PC-3 (cell line): ENCODE measurements at regions of chr17 and their contacts with region 1.

Region 1: DNA sequence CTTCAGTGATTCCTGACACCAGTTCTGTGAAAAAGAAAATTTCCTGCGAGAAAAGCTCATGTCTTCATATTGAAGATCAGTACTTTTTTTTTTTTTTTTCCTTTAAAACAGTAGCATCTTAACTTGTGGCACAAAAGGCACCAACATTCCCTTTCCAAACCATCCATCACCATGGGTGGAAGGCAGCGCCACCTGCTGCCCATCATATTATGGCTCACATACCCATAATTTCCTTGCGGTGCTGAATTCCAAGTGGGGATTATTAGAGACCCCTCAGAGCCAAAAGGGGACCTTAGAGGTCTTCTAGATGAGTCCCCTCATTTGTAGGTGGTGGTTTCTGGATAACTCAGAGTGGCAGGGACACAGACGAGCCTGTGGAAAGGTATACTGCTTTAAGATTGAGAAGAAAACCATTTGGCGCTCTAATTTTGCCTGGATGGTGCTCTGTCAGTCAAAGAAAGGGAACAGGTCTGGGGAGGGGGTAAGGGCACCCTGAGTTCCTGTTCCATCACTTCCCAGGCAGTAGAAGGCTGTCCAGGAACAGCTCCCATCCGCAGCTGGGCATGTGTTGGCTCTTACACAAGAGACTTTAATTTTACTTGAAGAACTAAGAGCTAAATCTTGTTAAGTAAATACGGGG is 7.9 kb upstream of the SOST start:
- DNase-seq: peak; percentile 78
- ATAC-seq: peak; percentile 63
- H3K4me3 ChIP-seq: no peak overlapping the region
- H3K27ac ChIP-seq: no peak overlapping the region
- H3K4me1 ChIP-seq: no peaks in the 10 kb centered on the region
- H3K27me3 ChIP-seq: no peaks in the 10 kb centered on the region
- CTCF ChIP-seq: peak; percentile 98

Region 2: DNA sequence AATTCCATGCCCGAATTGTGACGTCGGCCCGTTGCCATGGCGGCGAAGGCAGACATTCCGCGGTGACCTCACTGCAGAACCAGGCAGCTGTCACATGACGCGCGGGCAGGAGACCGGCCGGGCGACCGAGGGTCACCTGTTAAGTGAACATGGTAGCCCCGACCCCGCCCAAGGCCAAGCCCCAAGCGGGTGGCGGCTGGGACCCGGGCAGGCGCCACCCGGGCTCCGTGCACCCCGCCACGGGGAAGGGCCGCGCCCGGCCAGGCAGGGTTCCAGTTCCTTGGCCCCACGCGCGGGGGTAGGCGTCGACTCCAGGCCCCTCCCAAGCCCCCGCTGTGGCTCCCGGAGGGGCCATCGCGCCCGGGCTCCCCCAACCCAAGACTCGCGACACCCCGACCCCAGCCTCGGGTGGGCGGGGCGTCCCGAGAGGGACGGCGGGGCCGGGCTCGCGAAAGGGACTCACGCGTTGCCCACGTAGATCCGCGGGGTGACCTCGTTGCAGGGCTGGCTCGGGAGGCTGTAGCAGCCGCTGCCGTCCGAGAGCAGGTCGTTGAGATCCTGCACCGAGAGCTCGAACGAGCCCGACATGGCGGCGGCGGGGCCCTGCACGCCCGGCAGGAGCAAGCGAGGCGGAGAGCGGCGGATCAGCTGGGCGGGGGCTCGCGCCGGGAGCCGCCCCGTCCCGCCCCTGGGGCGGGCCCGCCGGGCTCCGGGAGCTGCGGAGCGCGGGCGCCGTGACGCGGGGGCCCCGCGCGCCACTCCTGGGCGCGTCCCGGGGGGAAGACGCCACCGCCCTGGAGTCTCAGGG is 12.0 kb after region 1 on chr17 and contains the start of gene DUSP3:
- CTCF ChIA-PET with region 1: no interaction called
- POLR2A ChIA-PET with region 1: interaction called, 17 read pairs
- intact Hi-C with region 1: no loop called
- DNase-seq: peak; percentile 89
- ATAC-seq: peak; percentile 95
- H3K4me3 ChIP-seq: peak within 1 kb of the TSS; percentile 94
- H3K27ac ChIP-seq: peak within 1 kb of the TSS; percentile 74
- H3K4me1 ChIP-seq: peaks cover 19% of the 10 kb centered on the region
- H3K27me3 ChIP-seq: no peaks in the 10 kb centered on the region
- CTCF ChIP-seq: no peak
- total RNA-seq, gene DUSP3: 48.6 and 50.7 TPM in 2 replicates

Region 3: DNA sequence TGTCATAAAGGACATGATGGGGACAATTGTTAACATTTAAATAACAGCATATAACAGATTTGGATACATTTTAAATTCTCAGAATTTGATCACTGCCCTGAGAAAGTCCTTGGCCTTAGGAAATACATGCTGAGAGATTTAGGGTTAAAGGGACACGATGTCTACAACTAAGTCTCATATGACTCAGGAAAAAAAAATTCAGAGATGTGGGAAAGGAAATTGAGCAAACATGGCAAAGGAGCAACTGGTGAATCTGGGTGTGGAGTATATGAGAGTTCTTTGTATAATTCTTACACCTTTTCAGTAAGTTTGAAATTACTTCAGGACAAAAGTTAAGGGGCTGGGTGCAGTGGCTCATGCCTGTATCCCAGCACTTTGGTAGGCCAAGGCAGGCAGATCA is 48.2 kb after region 1 on chr17:
- CTCF ChIA-PET with region 1: no interaction called
- POLR2A ChIA-PET with region 1: no interaction called
- intact Hi-C with region 1: no loop called
- DNase-seq: peak; percentile 76
- ATAC-seq: peak; percentile 80
- H3K4me3 ChIP-seq: no peak overlapping the region
- H3K27ac ChIP-seq: peak overlapping the region; percentile 18; the same call in 1 of the 2 replicates
- H3K4me1 ChIP-seq: peaks cover 16% of the 10 kb centered on the region
- H3K27me3 ChIP-seq: no peaks in the 10 kb centered on the region
- CTCF ChIP-seq: no peak